H1 (cell line): ENCODE measurements at regions of chr19 and their contacts with region 1.

Region 1: GRCh38 chr19:1269065-1269477 is at the start of gene CIRBP:
- DNase-seq: peak; percentile 94 to 97
- H3K4me3 ChIP-seq: peak within 1 kb of the TSS; percentile 74 to 95 (median 90)
- H3K27ac ChIP-seq: peak within 1 kb of the TSS; percentile 98
- H3K4me1 ChIP-seq: peaks cover 4 to 54% (median 37%) of the 10 kb centered on the region in 4 experiments
- H3K27me3 ChIP-seq: peaks cover 0 to 10% (median 5%) of the 10 kb centered on the region in 4 experiments; a peak in 4 of 7 replicates
- CTCF ChIP-seq: no peak
- EP300 ChIP-seq: 0 out of 3 replicates have a peak, but pooled peaks of 1 of the 2 experiments have one; percentile 30
- POLR2A ChIP-seq: peak; percentile 100
- RAD21 ChIP-seq: no peak
- total RNA-seq, gene CIRBP: 175 TPM in 2 replicates

Region 2: GRCh38 chr19:1026189-1027019 is 242.7 kb before region 1 on chr19 and contains the start of gene CNN2:
- CTCF ChIA-PET with region 1: interaction called, 3 read pairs
- POLR2A ChIA-PET with region 1: interaction called, 17 read pairs
- DNase-seq: peak in 1 of 2 experiments; percentile 92
- H3K4me3 ChIP-seq: peak within 1 kb of the TSS; percentile 85 to 99 (median 96)
- H3K27ac ChIP-seq: peak within 1 kb of the TSS; percentile 94
- H3K4me1 ChIP-seq: peaks cover 0 to 9% (median 4%) of the 10 kb centered on the region in 4 experiments; a peak in 5 of 7 replicates
- H3K27me3 ChIP-seq: no peaks in the 10 kb centered on the region
- CTCF ChIP-seq: no peak
- EP300 ChIP-seq: peak in 1 of 2 experiments; percentile 83; a peak in 1 of 3 replicates
- POLR2A ChIP-seq: peak; percentile 81 to 88
- RAD21 ChIP-seq: no peak
- total RNA-seq, gene CNN2: 522 and 551 TPM in 2 replicates

Region 3: DNA sequence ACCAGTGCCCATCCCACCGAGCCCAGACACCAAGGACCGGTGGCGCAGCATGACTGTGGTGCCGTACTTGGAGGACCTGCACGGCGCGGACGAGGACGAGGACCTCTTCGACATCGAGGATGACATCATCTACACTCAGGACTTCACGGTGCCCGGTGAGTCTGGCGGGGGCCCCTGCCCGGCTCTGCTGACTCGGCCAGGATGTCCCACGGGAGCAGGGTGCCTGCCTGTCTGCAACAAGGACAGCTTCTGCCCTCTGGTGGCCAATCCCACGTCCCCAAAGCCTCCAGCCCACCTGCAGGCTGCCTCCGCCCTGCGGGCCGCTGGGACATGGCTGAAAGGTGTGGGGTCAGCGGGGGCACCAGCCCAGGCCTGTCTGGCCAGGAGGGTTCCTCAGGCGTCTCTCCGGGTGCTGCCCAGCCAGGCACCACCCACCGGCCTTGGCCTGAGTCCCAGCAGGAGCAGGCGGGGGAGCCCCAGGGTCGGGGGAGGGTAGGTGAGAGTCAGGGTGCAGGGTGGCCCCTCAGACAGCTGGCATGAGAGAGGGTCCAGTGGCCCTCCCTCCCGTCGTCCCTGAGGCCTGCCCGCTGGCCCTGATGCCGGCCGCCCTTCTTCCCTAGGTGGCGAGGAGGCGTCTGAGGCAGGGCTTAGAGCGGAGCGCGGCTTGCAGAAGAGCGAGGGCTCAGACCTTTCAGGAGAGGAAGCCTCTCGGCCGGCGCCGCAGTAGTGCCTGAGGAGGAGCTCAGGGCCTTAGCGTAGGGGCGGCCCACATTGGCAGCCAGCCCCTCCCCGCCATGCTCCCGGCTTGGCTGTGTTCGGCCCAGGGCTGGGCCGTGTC is 45.8 kb before region 1 on chr19:
- CTCF ChIA-PET with region 1: interaction called, 4 read pairs
- POLR2A ChIA-PET with region 1: interaction called, 10 read pairs
- DNase-seq: peak in 1 of 2 experiments; percentile 80
- H3K4me3 ChIP-seq: no peak overlapping the region
- H3K27ac ChIP-seq: no peak overlapping the region; the same call in 1 of the 2 replicates
- H3K4me1 ChIP-seq: no peaks in the 10 kb centered on the region; a peak in 1 of 7 replicates
- H3K27me3 ChIP-seq: no peaks in the 10 kb centered on the region
- CTCF ChIP-seq: peak; percentile 72 to 91 (median 79)
- EP300 ChIP-seq: no peak
- POLR2A ChIP-seq: no peak
- RAD21 ChIP-seq: peak; percentile 51 to 63

Region 4: GRCh38 chr19:1285737-1286360 is 16.8 kb after region 1 on chr19 and contains the start of gene EFNA2:
- CTCF ChIA-PET with region 1: interaction called, 4 read pairs
- POLR2A ChIA-PET with region 1: interaction called, 331 read pairs
- DNase-seq: no peak
- H3K4me3 ChIP-seq: peak within 1 kb of the TSS; percentile 47 to 67 (median 49)
- H3K27ac ChIP-seq: no peak within 1 kb of the TSS
- H3K4me1 ChIP-seq: peaks cover 0 to 20% (median 9%) of the 10 kb centered on the region in 4 experiments; a peak in 5 of 7 replicates
- H3K27me3 ChIP-seq: peaks cover 0 to 21% (median 12%) of the 10 kb centered on the region in 4 experiments; a peak in 5 of 7 replicates
- CTCF ChIP-seq: peak in 1 of 3 experiments; percentile 16; a peak in 1 of 4 replicates
- EP300 ChIP-seq: no peak
- POLR2A ChIP-seq: no peak
- RAD21 ChIP-seq: 0 out of 4 replicates have a peak, but pooled peaks of 1 of the 2 experiments have one; percentile 13
- total RNA-seq, gene EFNA2: 7.0 and 10.3 TPM in 2 replicates

Region 5: DNA sequence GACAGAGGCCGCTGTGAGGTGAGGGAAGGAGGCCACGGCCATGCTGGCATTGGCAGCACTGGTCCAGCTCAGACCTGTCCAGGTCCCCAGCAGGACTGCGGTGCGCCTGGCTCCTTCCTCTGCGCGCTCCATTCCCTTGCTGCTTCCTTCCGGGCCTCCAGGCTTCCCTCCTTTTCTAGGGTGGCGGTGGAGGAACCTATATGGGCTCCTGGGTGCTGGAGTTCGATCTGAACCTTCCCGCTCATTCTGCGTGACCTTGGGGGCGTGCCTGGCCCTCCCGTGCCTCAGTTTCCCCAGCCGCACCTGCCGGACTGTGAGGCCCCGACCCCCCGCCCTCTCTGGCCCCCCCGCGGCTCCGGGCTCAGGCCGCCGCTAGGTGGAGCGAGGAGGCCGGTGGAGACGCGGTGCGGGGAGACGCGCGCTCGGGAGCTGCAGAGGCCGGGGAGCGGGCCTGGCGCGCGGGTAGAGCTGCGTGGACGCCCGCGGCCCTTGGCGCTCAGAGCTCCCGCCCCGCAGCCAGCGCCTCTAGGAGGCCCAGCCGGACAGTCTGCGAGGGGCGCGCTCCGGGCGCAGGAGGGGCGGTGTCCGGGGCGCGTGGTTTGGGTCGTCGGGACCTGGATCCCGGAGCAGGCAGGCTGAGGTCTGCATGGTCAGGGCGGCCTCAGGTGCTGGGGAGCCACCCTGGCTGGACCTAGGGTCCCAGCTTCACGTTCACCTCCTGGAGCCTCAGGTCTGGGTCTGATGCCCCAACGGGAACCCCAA is 46.6 kb after region 1 on chr19:
- CTCF ChIA-PET with region 1: interaction called, 4 read pairs
- POLR2A ChIA-PET with region 1: interaction called, 18 read pairs
- DNase-seq: peak in 1 of 2 experiments; percentile 87
- H3K4me3 ChIP-seq: peak overlapping the region in 3 of 4 experiments; percentile 27 to 56 (median 32); a peak in 4 of 8 replicates
- H3K27ac ChIP-seq: no peak overlapping the region
- H3K4me1 ChIP-seq: peaks cover 0 to 5% (median 0%) of the 10 kb centered on the region in 4 experiments; a peak in 3 of 7 replicates
- H3K27me3 ChIP-seq: peaks cover 0 to 12% (median 5%) of the 10 kb centered on the region in 4 experiments; a peak in 5 of 7 replicates
- CTCF ChIP-seq: peak; percentile 51 to 73 (median 64)
- EP300 ChIP-seq: no peak
- POLR2A ChIP-seq: no peak
- RAD21 ChIP-seq: peak; percentile 56 to 77

Region 6: GRCh38 chr19:1402411-1403070 is 133.5 kb after region 1 on chr19:
- CTCF ChIA-PET with region 1: interaction called, 4 read pairs
- POLR2A ChIA-PET with region 1: interaction called, 19 read pairs
- DNase-seq: no peak
- H3K4me3 ChIP-seq: no peak overlapping the region
- H3K27ac ChIP-seq: no peak overlapping the region
- H3K4me1 ChIP-seq: peaks cover 2 to 8% (median 4%) of the 10 kb centered on the region in 4 experiments; a peak in 6 of 7 replicates
- H3K27me3 ChIP-seq: peaks cover 0 to 2% (median 0%) of the 10 kb centered on the region in 4 experiments; a peak in 2 of 7 replicates
- CTCF ChIP-seq: no peak
- EP300 ChIP-seq: no peak
- POLR2A ChIP-seq: no peak
- RAD21 ChIP-seq: no peak